Ascending aorta (tissue), 2 donors: ENCODE measurements at regions of chr12 and their contacts with region 1.

Region 1: DNA sequence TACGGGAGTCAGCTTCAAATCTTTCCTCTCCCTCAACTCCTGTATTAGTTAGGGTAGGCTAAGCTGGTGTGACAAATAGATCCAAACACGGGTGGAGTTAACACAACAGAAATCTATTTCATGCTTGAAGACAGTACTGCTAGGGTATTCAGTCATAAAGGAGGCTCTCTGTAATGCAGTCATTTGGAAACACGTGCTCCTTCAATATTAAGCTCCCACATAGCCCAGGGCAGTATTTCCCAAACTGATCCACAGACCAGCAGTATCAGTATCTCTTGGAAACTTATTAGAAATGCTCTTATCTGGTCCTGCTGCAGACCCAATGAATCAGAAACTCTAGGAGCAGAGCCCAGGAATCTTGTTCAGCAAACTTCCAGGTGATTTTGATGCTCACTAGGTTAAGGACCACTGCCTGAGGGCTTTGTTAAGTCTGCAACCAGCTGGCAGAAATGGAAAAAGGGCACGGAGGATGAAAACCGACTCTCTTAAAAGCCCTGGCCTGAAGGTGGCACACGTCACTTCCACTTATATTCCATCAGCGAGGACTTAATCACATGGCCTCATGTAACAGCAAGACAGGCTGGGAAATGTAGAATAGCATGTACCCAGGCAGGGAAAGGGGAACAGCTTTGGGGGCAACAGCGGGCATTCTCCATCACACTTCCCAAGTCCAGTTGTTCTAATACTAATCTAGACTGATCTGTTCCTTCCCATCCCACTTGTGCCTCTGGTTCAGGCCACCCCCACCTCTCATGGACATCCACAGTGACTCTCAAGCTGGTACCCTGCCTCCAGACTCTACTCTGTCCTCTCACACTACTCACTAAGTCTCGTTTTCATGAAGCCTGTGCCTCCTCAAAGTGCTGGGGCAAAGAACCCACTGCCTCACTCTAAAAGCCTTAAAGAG is 38.2 kb upstream of the RIC8B start:
- DNase-seq: no peak
- H3K4me3 ChIP-seq: no peak overlapping the region
- H3K27ac ChIP-seq: no peak overlapping the region
- H3K4me1 ChIP-seq: no peaks in the 10 kb centered on the region
- H3K27me3 ChIP-seq: no peaks in the 10 kb centered on the region
- CTCF ChIP-seq: no peak

Region 2: DNA sequence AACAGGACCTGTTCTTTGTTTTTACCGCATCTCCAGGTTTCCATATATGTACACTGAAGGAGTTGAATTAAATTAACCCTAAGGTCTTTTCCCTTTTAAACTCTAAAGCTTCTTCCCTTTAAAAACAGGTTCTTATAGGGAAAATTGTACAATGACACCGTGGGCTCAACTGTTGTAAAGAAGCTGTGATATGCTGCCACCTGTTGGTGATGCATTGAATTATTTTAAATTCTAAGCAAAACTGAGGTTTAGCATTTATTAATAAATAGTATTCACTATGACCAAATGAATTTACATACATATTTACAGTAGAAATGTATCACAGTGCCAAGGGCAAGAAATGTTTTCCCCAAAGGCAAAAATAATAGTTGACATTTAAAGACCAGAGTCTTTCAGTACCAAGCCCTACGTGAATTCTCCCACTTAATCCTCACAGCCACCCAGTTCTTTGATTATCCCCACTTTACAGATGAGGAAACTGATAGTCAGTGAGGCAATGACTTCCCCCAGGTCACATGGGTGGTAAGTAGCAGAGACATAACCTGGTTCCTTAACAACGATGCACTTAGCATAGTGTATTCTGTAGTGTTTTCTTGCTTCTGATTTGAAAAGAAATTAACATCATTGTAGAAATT is 183.7 kb after region 1 on chr12:
- intact Hi-C with region 1: loop called (anchors 10 kb)
- DNase-seq: no peak
- H3K4me3 ChIP-seq: no peak overlapping the region
- H3K27ac ChIP-seq: no peak overlapping the region
- H3K4me1 ChIP-seq: no peaks in the 10 kb centered on the region
- H3K27me3 ChIP-seq: no peaks in the 10 kb centered on the region
- CTCF ChIP-seq: peak; percentile 72 to 80 (median 74)